Naive thymus-derived CD4-positive, alpha-beta T cell (primary cell): ENCODE measurements at regions of chr6 and their contacts with region 1.

Region 1: DNA sequence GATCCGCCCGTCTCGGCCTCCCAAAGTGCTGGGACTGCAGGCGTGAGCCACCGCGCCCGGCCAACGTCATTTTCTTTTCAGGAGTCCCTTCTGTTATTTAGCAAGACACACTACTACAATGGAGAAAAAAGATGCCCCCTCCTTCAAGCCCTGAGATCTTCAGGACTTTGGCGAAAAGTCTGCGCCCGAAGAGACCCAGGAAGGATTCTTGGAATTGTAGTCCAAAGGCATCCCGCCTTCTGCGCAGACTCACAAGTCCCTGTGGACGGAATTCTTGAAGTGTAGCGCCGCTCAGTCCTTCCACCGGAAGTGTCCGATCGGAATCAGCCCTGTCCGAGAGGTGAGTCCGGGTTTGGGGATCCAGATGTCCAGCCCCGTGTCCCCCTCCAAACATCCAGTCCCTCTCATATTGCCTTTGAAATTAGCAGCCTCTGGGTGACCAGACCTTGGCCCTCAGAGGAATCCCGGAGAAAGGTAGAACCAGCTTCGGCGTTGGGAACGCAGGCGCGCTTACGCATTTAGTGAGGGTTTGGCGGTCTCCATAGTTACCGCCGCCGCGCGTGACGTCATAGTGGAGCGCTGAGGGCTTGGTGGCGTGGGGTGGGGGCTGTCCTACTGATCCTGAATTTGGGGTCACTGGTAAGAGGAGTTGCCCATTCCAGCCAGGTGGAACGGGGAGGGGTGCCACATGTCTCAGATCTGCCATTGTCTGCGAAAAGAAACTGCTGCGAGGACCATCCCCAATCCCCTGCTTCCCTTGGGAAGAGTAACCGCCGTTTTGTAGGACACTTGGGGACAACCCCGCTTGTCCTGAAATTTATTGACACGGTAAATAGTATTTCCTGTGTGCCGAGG is 490 bp downstream of the ZNF165 start:
- DNase-seq: peak; percentile 89 to 94 (median 93)
- ATAC-seq: peak; percentile 85
- H3K4me3 ChIP-seq: peak overlapping the region; percentile 99
- H3K4me3 Mint-ChIP-seq: peak overlapping the region; percentile 87 to 99 (median 98)
- H3K27ac ChIP-seq: peak overlapping the region; percentile 97
- H3K27ac Mint-ChIP-seq: peak overlapping the region; percentile 84 to 99 (median 98)
- H3K4me1 ChIP-seq: peaks cover 6 to 7% of the 10 kb centered on the region in 2 donors
- H3K4me1 Mint-ChIP-seq: peaks cover 12 to 27% (median 16%) of the 10 kb centered on the region in 7 donors
- H3K27me3 ChIP-seq: no peaks in the 10 kb centered on the region
- H3K27me3 Mint-ChIP-seq: peaks cover 0 to 3% (median 0%) of the 10 kb centered on the region in 5 donors

Region 2: DNA sequence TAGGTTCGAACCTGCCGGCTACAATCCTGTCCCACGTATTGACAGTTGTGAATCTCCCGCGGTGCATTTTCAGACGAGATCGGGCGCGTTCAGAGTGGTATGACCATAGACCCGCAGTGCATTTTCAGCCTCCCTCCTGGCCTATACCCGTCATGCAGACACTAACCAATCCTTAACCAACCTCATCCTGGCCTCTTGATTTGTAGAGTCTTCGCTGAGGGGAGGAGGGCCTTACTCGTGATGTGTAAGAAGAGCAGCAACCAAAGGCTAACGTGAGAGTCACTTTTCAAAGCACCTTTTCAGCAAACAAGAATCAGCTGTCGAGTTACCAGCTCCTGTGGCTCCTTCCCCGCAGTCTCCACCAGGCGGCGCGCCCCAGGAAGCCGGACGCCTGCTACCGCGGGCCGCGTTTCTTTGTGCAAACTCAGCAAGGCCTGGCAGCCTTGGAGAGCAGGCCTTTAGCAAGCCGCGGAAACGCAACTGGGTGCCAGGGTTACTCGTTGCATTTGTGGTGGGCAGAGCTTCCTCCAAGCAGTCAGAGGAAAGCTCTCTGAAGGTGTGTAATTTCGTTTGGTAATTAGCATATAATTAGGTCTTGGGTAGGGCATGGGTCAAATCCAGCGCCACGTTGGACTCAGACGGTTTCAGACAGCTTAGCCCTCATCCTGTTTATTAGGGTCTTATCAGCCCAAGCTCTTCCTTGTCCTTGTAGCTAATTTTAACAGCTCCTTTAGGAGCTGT is 308.4 kb before region 1 on chr6:
- CTCF ChIA-PET with region 1: no interaction called
- POLR2A ChIA-PET with region 1: no interaction called
- intact Hi-C with region 1: loop called in 1 of 2 experiments (anchors 5 kb)
- DNase-seq: peak; percentile 72 to 88 (median 82)
- ATAC-seq: peak; percentile 98
- H3K4me3 ChIP-seq: no peak overlapping the region
- H3K4me3 Mint-ChIP-seq: peak overlapping the region in 6 of 10 donors; percentile 14 to 59 (median 34)
- H3K27ac ChIP-seq: no peak overlapping the region
- H3K27ac Mint-ChIP-seq: peak overlapping the region in 2 of 9 donors; percentile 7 to 8
- H3K4me1 ChIP-seq: peaks cover 3 to 5% of the 10 kb centered on the region in 2 donors
- H3K4me1 Mint-ChIP-seq: peaks cover 6 to 20% (median 7%) of the 10 kb centered on the region in 7 donors
- H3K27me3 ChIP-seq: no peaks in the 10 kb centered on the region
- H3K27me3 Mint-ChIP-seq: peaks cover 1 to 35% (median 10%) of the 10 kb centered on the region in 5 donors

Region 3: DNA sequence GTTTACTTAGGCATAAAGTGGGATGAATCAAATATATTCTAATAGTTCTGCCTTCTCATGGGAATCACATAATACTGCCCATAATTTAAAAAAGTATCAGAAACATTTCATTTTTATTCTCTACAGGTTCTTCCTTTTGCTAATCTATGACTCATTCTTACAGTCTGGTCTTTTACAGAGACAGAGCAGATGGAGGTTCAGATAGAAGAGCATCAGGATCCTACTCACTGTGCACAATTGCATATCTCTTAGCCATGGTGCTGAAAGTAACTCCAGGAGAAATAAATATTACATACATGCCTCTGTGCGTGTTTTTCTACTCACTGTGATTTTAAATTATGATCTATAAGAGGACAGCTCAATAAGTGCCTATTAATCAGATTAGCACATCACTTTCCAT is 140.1 kb before region 1 on chr6:
- CTCF ChIA-PET with region 1: no interaction called
- POLR2A ChIA-PET with region 1: no interaction called
- intact Hi-C with region 1: no loop called
- DNase-seq: no peak
- ATAC-seq: no peak
- H3K4me3 ChIP-seq: no peak overlapping the region
- H3K4me3 Mint-ChIP-seq: no peak overlapping the region
- H3K27ac ChIP-seq: no peak overlapping the region
- H3K27ac Mint-ChIP-seq: no peak overlapping the region
- H3K4me1 ChIP-seq: no peaks in the 10 kb centered on the region
- H3K4me1 Mint-ChIP-seq: no peaks in the 10 kb centered on the region
- H3K27me3 ChIP-seq: peaks cover 0 to 6% of the 10 kb centered on the region in 2 donors
- H3K27me3 Mint-ChIP-seq: peaks cover 42 to 66% (median 59%) of the 10 kb centered on the region in 5 donors

Region 4: GRCh38 chr6:28136585-28137504 is 56.0 kb after region 1 on chr6:
- CTCF ChIA-PET with region 1: no interaction called
- POLR2A ChIA-PET with region 1: interaction called, 5 read pairs
- intact Hi-C with region 1: loop called (anchors 1 kb)
- DNase-seq: peak; percentile 45 to 72 (median 56)
- ATAC-seq: peak; percentile 56
- H3K4me3 ChIP-seq: peak overlapping the region; percentile 89
- H3K4me3 Mint-ChIP-seq: peak overlapping the region; percentile 91 to 100 (median 94)
- H3K27ac ChIP-seq: peak overlapping the region; percentile 98
- H3K27ac Mint-ChIP-seq: peak overlapping the region; percentile 91 to 100 (median 97)
- H3K4me1 ChIP-seq: peaks cover 10 to 19% of the 10 kb centered on the region in 2 donors
- H3K4me1 Mint-ChIP-seq: peaks cover 31 to 78% (median 72%) of the 10 kb centered on the region in 7 donors
- H3K27me3 ChIP-seq: no peaks in the 10 kb centered on the region
- H3K27me3 Mint-ChIP-seq: no peaks in the 10 kb centered on the region

Region 5: GRCh38 chr6:28349892-28350737 is 269.3 kb after region 1 on chr6 and contains the start of gene ZKSCAN3:
- CTCF ChIA-PET with region 1: no interaction called
- POLR2A ChIA-PET with region 1: no interaction called
- intact Hi-C with region 1: loop called in 1 of 2 experiments (anchors 2 kb)
- DNase-seq: peak; percentile 53 to 83 (median 80)
- ATAC-seq: peak; percentile 98
- H3K4me3 ChIP-seq: peak within 1 kb of the TSS; percentile 80
- H3K4me3 Mint-ChIP-seq: peak within 1 kb of the TSS; percentile 94 to 100 (median 98)
- H3K27ac ChIP-seq: peak within 1 kb of the TSS; percentile 75
- H3K27ac Mint-ChIP-seq: peak within 1 kb of the TSS; percentile 90 to 97 (median 94)
- H3K4me1 ChIP-seq: peaks cover 0 to 7% of the 10 kb centered on the region in 2 donors
- H3K4me1 Mint-ChIP-seq: peaks cover 28 to 39% (median 35%) of the 10 kb centered on the region in 7 donors
- H3K27me3 ChIP-seq: peaks cover 0 to 4% of the 10 kb centered on the region in 2 donors
- H3K27me3 Mint-ChIP-seq: peaks cover 11 to 30% (median 12%) of the 10 kb centered on the region in 5 donors
- total RNA-seq, gene ZKSCAN3: 3.3 to 13.2 (median 5.8) TPM

Region 6: GRCh38 chr6:28838634-28839442 is 758.0 kb after region 1 on chr6:
- CTCF ChIA-PET with region 1: no interaction called
- POLR2A ChIA-PET with region 1: no interaction called
- intact Hi-C with region 1: loop called in 1 of 2 experiments (anchors 10 kb)
- DNase-seq: peak; percentile 66 to 89 (median 81)
- ATAC-seq: peak; percentile 79
- H3K4me3 ChIP-seq: peak overlapping the region; percentile 83
- H3K4me3 Mint-ChIP-seq: peak overlapping the region; percentile 86 to 99 (median 96)
- H3K27ac ChIP-seq: peak overlapping the region; percentile 60
- H3K27ac Mint-ChIP-seq: peak overlapping the region; percentile 83 to 98 (median 93)
- H3K4me1 ChIP-seq: peaks cover 8 to 11% of the 10 kb centered on the region in 2 donors
- H3K4me1 Mint-ChIP-seq: peaks cover 13 to 31% (median 20%) of the 10 kb centered on the region in 7 donors
- H3K27me3 ChIP-seq: no peaks in the 10 kb centered on the region
- H3K27me3 Mint-ChIP-seq: peaks cover 17 to 66% (median 25%) of the 10 kb centered on the region in 5 donors

Region 7: GRCh38 chr6:30066577-30067459 is 1986.0 kb after region 1 on chr6 and contains the start of gene PPP1R11:
- CTCF ChIA-PET with region 1: no interaction called
- POLR2A ChIA-PET with region 1: no interaction called
- intact Hi-C with region 1: loop called in 1 of 2 experiments (anchors 5 kb)
- DNase-seq: peak; percentile 84 to 100 (median 99)
- ATAC-seq: peak; percentile 99
- H3K4me3 ChIP-seq: peak within 1 kb of the TSS; percentile 94
- H3K4me3 Mint-ChIP-seq: peak within 1 kb of the TSS; percentile 87 to 100 (median 98)
- H3K27ac ChIP-seq: peak within 1 kb of the TSS; percentile 96
- H3K27ac Mint-ChIP-seq: peak within 1 kb of the TSS; percentile 96 to 100 (median 99)
- H3K4me1 ChIP-seq: peaks cover 28 to 41% of the 10 kb centered on the region in 2 donors
- H3K4me1 Mint-ChIP-seq: peaks cover 43 to 77% (median 71%) of the 10 kb centered on the region in 7 donors
- H3K27me3 ChIP-seq: no peaks in the 10 kb centered on the region
- H3K27me3 Mint-ChIP-seq: peaks cover 10 to 22% (median 16%) of the 10 kb centered on the region in 5 donors
- total RNA-seq, gene PPP1R11: 49.4 to 67.1 (median 62.7) TPM